Posterior vena cava (tissue), 2 donors: ENCODE measurements at regions of chr14 and their contacts with region 1.

Region 1: GRCh38 chr14:68911594-68912227 is 67.4 kb downstream of the ACTN1 start:
- DNase-seq: no peak

Region 2: GRCh38 chr14:68359837-68360552 is 551.7 kb before region 1 on chr14:
- intact Hi-C with region 1: no loop called
- DNase-seq: peak; percentile 84

Region 3: GRCh38 chr14:68619816-68620574 is 291.7 kb before region 1 on chr14:
- intact Hi-C with region 1: no loop called
- DNase-seq: no peak

Region 4: DNA sequence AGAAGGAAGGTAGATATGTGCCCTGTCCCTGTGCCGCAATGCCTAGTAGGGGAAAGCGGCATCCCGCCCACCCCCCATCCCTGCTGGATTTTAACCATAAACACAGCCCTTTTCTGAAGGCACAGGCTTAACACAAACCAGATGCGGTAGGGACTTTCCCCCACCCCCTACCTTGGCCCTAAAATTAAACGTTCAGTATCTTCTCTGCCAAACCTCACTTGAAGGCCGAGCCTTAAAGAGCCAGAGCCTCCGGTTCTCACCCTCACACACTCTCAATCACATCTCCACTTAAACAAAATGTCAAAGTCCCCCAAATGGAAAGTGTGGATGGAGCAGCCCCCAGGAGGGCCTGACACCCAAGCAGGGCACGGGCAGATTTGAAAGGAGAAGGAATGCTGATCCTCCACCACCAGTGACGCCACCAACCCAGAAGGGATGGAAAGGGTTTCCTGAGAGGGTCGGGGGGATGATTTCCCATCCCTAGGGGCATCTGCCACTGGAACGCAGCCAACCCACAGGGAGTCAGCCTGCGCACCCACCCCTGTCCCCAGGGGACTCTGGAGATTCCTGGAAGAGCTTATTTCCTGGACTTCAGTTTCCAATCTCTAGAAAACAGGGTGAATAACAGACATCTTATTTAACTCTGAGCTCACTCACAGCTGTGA is 41.0 kb after region 1 on chr14:
- intact Hi-C with region 1: loop called in 1 of 2 experiments (anchors 1 kb)
- DNase-seq: peak; percentile 78

Region 5: GRCh38 chr14:69090187-69090789 is 178.6 kb after region 1 on chr14:
- intact Hi-C with region 1: loop called (anchors 5 to 10 kb)
- DNase-seq: no peak

Region 6: DNA sequence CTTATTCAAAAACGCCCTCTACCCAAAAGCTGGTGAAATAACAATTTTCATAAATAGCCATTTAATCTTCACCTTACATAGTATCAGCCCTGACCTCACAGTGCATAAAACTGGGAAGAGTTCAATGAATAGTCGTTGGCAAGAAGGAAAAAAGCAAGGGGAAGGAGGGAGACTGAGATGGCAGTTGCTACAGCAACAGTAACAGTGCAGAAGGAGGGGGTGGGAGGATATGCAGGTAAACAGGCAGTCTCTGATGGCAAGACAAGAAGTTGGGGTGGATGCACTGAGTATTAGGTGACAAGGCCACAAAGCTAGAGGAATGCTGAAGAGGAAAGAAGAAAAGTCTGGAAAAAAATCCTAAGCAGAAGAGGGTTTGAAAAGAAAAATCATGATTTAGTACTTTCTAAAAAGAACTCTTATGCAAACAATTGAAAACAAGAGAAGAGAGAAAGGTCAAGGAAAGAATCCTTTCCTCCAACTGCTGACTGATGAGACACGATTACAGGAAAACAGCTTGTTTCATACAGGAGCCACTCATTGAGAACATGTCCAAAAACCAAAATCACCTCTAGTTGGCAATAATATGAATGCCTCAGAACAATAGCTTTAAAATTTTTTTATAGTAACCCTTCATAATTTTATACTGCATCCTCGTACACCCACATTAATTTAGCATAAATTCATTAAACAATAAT is 185.2 kb after region 1 on chr14:
- intact Hi-C with region 1: loop called (anchors 5 to 10 kb)
- DNase-seq: no peak